Activated B cell treated with CpG ODN at 0.5 μM for 24 hours (primary cell): ENCODE measurements at regions of chr1 and their contacts with region 1.

Region 1: DNA sequence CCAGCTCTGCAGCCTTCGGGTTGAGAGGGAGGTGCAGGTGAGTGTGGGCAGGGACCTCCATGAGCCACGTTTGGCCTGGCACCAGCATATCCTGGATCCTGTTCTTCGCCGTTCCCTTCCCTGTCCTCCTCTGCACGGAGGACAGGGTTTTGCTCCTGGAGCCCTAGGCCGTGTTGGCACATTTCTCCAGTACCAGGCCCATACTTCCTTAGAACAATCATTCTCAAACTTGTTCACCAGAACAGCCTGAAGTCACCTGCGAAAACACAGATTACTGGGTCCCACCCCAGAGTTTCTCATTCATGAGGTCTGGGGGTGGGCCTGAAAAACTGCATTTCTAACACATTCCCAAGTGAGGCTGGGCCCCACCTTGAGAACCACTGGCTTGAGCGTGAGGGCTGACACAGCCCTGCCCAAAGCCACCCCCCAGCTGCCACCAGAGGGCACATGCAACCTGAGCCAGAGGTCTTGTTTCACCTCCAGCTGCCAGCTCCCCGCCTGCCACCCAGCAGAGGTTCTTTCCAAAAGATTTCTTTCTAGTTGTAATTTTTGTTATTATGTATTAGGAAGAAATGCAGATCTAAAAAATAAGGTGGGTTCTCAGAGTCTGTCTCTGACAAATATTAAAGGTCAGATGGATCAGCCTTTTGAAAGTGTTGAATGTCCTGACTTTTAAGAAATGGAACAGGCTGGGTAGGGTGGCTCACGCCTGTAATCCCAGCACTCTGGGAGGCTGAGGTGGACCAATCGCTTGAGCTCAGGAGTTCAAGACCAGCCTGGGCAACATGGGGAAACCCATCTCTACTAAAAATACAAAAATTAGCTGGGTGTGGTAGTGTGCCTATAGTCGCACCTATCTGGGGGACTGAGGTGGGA is 39.6 kb upstream of the LDLRAP1 start:
- DNase-seq: peak; percentile 37
- ATAC-seq: peak; percentile 77
- H3K4me3 Mint-ChIP-seq: no peak overlapping the region
- H3K27ac Mint-ChIP-seq: no peak overlapping the region
- H3K4me1 Mint-ChIP-seq: peaks cover 10% of the 10 kb centered on the region
- H3K27me3 Mint-ChIP-seq: peaks cover 3% of the 10 kb centered on the region
- CTCF ChIP-seq: no peak

Region 2: GRCh38 chr1:25487628-25488027 is 16.2 kb before region 1 on chr1:
- CTCF ChIA-PET with region 1: interaction called, 10 read pairs
- POLR2A ChIA-PET with region 1: no interaction called
- intact Hi-C with region 1: no loop called
- DNase-seq: no peak
- ATAC-seq: no peak
- H3K4me3 Mint-ChIP-seq: no peak overlapping the region
- H3K27ac Mint-ChIP-seq: no peak overlapping the region
- H3K4me1 Mint-ChIP-seq: peaks cover 11% of the 10 kb centered on the region
- H3K27me3 Mint-ChIP-seq: no peaks in the 10 kb centered on the region
- CTCF ChIP-seq: no peak

Region 3: DNA sequence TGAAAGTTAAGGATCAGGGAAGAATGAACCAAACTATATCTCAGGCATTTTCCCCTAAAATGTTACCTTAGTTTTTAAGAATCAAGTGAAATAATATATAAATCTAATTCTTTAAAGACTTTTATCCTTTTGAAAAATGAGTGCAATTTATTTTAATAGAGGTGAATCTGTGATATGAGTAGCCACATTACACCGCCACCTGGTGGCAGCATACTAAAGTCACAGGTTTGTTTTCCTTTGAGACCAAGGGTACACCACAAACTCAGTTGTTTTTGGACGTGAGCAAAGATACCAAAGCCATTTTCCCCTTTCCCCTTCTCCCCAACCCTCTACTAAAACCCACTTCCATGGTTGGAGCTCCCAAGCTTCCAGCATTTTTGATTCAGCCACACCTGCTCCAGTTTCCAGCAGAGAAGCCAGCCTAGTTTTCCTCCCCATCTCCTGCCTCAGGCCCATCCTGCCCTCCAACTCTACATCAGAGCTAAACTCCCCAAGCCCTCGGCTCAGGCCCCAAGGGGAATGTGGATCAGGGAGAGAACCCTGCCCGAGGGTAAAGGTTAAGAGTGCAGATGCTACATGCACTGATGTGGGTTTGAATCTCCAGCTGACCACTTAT is 16.8 kb after region 1 on chr1:
- CTCF ChIA-PET with region 1: interaction called, 14 read pairs
- POLR2A ChIA-PET with region 1: no interaction called
- intact Hi-C with region 1: no loop called
- DNase-seq: peak; percentile 39
- ATAC-seq: peak; percentile 51
- H3K4me3 Mint-ChIP-seq: no peak overlapping the region
- H3K27ac Mint-ChIP-seq: no peak overlapping the region
- H3K4me1 Mint-ChIP-seq: peaks cover 9% of the 10 kb centered on the region
- H3K27me3 Mint-ChIP-seq: peaks cover 7% of the 10 kb centered on the region
- CTCF ChIP-seq: no peak

Region 4: DNA sequence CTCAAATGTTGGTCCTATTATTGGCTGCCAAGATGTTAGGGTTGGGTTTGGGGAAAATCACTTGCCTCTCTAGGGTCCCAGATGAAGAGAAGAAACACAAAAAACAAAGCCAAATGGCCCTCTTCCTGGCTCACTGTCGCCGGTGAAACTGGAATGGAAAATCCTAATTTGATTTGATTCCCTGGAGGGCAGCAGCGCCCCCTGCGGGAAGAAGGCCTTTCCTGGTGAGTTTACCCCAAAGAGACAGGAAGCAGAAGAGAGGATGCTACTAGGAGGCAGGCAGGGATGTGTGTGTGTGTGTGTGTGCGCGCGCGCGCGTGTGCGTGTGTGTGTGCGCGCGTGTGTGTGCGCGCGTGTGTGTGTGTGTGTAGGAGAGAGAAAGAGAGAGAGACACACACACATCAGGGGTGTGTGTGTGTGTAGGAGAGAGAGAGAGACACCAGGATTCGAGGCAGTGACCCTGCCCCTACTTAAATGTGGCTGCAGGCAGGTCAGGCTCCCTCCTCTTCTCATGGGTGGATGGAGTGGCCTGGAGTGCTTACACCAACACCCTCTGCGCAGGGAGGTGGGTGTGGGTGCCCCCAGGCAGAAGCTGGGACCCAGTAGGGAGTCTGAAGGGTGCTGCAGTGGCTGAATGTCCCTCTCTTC is 293.1 kb after region 1 on chr1:
- CTCF ChIA-PET with region 1: interaction called, 3 read pairs
- POLR2A ChIA-PET with region 1: no interaction called
- intact Hi-C with region 1: loop called (anchors 1 kb)
- DNase-seq: peak; percentile 36
- ATAC-seq: peak; percentile 32
- H3K4me3 Mint-ChIP-seq: peak overlapping the region; percentile 4
- H3K27ac Mint-ChIP-seq: no peak overlapping the region
- H3K4me1 Mint-ChIP-seq: peaks cover 16% of the 10 kb centered on the region
- H3K27me3 Mint-ChIP-seq: no peaks in the 10 kb centered on the region
- CTCF ChIP-seq: no peak

Region 5: GRCh38 chr1:25810341-25811299 is 306.8 kb after region 1 on chr1:
- CTCF ChIA-PET with region 1: interaction called, 35 read pairs
- POLR2A ChIA-PET with region 1: interaction called, 3 read pairs
- intact Hi-C with region 1: no loop called
- DNase-seq: peak; percentile 81
- ATAC-seq: peak; percentile 92
- H3K4me3 Mint-ChIP-seq: no peak overlapping the region
- H3K27ac Mint-ChIP-seq: no peak overlapping the region
- H3K4me1 Mint-ChIP-seq: peaks cover 18% of the 10 kb centered on the region
- H3K27me3 Mint-ChIP-seq: no peaks in the 10 kb centered on the region
- CTCF ChIP-seq: peak; percentile 96